ENCODE measurements at regions of chr4 and their contacts with region 1.

Region 1: DNA sequence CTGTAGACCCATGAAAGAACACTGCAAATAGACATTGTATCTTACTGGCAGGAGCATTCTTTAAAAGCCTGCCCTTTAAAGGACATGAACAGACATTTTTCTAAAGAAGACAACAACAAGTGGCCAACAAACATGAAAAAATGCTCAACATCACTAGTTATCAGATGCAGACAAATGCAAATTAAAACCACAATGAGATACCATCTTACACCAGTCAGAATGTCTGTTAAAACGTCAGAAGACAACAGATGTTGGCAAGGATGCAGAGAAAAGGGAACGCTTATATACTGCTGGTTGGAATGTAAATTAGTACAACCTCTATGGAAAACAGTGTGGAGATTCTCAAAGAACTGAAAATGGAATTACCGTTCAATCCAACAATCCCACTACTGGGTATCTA is 77.2 kb downstream of the ATP10D start:
- DNase-seq: no peak
- ATAC-seq: no peak
- H3K4me3 Mint-ChIP-seq: no peak overlapping the region
- H3K27ac Mint-ChIP-seq: peak overlapping the region; percentile 28
- H3K4me1 Mint-ChIP-seq: peaks cover 20% of the 10 kb centered on the region
- H3K27me3 Mint-ChIP-seq: no peaks in the 10 kb centered on the region

Region 2: GRCh38 chr4:47463235-47463956 is 98.9 kb before region 1 on chr4 and contains the start of gene COMMD8:
- CTCF ChIA-PET with region 1: interaction called, 35 read pairs
- POLR2A ChIA-PET with region 1: no interaction called
- DNase-seq: peak; percentile 98
- ATAC-seq: peak; percentile 96
- H3K4me3 Mint-ChIP-seq: peak within 1 kb of the TSS; percentile 87
- H3K27ac Mint-ChIP-seq: peak within 1 kb of the TSS; percentile 80
- H3K4me1 Mint-ChIP-seq: peaks cover 27% of the 10 kb centered on the region
- H3K27me3 Mint-ChIP-seq: no peaks in the 10 kb centered on the region
- total RNA-seq, gene COMMD8: 30.2 to 30.4 TPM

Region 3: DNA sequence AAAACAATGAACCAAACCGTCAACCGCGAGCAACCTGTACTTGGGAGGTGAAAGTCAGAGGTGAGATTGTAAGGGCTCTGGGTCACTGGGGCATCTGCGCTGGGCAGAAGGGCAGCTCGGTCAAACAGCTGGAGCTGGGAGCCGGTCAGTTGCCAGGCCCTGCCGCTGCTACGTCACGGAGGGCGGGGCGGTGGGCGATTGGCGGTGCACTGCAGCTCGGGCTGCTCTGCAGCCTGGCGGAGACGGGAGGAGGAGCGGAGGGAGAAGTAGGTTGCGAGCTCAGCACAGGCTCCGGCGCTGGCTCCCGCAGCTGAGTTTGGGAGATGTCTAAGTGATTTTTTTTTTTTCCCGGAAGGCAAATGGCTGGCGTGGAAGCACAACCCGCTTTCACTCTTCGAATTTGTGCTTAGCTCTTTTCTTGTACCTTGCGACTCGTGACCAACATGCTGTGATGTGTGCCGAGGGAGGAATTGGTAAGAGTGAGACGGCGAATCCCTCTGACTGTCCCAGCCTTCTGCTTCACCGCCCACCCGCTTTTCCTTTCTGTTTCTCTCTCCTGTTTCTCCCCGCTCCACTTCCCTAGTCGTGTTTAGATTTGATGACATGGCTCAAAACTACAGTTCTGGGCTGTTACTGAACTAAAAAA is 77.1 kb before region 1 on chr4 and contains the start of gene ATP10D:
- CTCF ChIA-PET with region 1: interaction called, 15 read pairs
- POLR2A ChIA-PET with region 1: no interaction called
- DNase-seq: peak; percentile 86
- ATAC-seq: peak; percentile 100
- H3K4me3 Mint-ChIP-seq: peak within 1 kb of the TSS; percentile 90
- H3K27ac Mint-ChIP-seq: peak within 1 kb of the TSS; percentile 93
- H3K4me1 Mint-ChIP-seq: peaks cover 24% of the 10 kb centered on the region
- H3K27me3 Mint-ChIP-seq: peaks cover 5% of the 10 kb centered on the region
- total RNA-seq, gene ATP10D: 10.1 to 11.7 TPM

Region 4: GRCh38 chr4:47538495-47539154 is 23.7 kb before region 1 on chr4:
- CTCF ChIA-PET with region 1: interaction called, 11 read pairs
- POLR2A ChIA-PET with region 1: no interaction called
- DNase-seq: no peak
- ATAC-seq: no peak
- H3K4me3 Mint-ChIP-seq: no peak overlapping the region
- H3K27ac Mint-ChIP-seq: no peak overlapping the region
- H3K4me1 Mint-ChIP-seq: peaks cover 32% of the 10 kb centered on the region
- H3K27me3 Mint-ChIP-seq: no peaks in the 10 kb centered on the region

Region 5: DNA sequence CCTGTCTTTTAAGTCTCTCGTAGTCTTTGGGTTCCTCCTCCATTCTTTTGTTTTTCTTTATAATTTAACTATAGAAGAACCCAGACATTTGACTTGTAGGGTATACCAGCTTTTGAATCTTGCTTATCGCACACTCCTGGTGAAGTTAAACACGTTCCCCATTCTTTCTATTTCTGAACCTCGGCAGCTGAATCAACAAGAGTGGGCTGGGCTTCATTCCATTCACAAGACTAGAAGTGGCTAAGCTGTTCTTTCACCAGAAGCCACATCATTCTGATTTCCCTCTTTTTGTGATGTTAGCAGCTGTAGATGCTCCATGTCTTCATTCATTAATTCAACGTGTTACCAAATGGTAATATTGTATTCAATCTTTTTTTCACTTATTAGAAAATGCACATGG is 107.6 kb after region 1 on chr4:
- CTCF ChIA-PET with region 1: no interaction called
- POLR2A ChIA-PET with region 1: no interaction called
- DNase-seq: no peak
- ATAC-seq: no peak
- H3K4me3 Mint-ChIP-seq: no peak overlapping the region
- H3K27ac Mint-ChIP-seq: no peak overlapping the region
- H3K4me1 Mint-ChIP-seq: no peaks in the 10 kb centered on the region
- H3K27me3 Mint-ChIP-seq: peaks cover 19% of the 10 kb centered on the region